ENCODE measurements at regions of chr3 and their contacts with region 1.

Region 1: GRCh38 chr3:112990672-112991602 is at the start of gene GTPBP8:
- DNase-seq: peak; percentile 86
- CTCF ChIP-seq: no peak

Region 2: DNA sequence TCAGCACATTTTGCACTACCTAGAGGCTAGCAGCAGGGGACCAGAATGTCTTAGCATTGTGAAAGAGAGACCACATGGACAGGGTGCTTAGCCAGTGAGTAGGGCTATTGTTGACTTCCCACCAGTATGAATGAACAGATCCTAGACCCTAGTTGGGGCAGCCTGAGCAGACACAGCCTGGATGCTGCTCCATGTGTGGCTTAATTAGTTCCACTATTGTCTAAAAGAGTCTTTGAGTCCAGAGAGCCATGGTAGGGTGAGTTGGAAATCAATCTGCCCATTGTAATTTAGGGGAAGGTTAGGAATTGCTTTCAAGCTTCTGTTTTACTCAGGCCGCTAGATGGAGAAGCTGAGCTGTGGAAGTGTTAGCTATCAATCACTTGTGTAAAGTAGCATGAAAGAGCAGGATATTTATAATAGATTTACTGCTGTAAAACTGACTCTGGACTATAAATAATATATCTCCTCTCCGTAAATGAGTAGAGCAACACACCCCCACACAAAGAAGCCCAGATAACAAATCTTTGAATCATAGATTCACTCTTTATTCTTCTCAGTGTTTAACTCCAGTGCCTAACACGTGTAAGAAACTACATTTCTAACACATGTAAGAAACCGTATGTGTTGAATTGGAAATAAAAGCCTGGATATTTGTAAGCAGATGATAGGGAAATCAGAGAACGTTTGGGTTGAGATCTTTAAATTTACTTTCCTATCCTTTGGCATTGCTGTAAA is 853.8 kb before region 1 on chr3:
- in situ Hi-C with region 1: loop called (anchors 25 kb)
- DNase-seq: peak; percentile 29
- CTCF ChIP-seq: peak; percentile 59

Region 3: DNA sequence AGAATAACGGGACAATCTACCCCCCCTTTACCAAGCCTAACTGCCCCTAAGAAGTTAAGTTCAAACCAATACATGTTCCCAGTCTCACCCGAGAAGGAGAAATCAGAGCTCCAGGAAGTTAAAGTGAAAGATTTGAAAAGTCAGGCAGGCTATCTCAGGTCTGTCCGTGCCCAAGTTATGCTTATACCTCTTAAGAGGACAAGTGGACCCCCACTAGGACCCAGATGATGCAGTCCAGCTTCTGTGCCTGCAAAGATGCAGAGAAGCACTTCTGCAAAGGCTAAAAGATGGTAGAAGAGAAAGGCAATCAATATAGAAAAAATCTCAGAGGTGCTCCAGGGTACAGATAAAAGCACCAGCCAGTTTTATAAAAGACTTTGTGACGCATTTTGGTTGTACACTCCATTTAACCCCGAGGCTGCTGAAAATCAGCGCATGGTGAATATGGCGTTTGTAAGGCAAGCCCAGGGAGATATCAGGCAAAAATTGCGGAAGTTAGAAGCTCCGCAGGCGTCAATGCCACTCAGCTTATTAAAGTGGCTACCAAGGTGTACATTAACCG is 687.1 kb before region 1 on chr3:
- in situ Hi-C with region 1: loop called (anchors 25 kb)
- DNase-seq: peak; percentile 8
- CTCF ChIP-seq: no peak

Region 4: GRCh38 chr3:113104761-113105464 is 114.0 kb after region 1 on chr3:
- in situ Hi-C with region 1: no loop called
- DNase-seq: no peak
- CTCF ChIP-seq: no peak